Mammary epithelial cell (primary cell): ENCODE measurements at regions of chr12 and their contacts with region 1.

Region 1: GRCh38 chr12:100706033-100706432 is 88.5 kb upstream of the ANO4 start:
- DNase-seq: peak; percentile 98
- H3K4me3 ChIP-seq: no peak overlapping the region
- H3K27ac ChIP-seq: peak overlapping the region; percentile 92
- H3K4me1 ChIP-seq: peaks cover 14% of the 10 kb centered on the region
- H3K27me3 ChIP-seq: no peaks in the 10 kb centered on the region
- CTCF ChIP-seq: no peak

Region 2: DNA sequence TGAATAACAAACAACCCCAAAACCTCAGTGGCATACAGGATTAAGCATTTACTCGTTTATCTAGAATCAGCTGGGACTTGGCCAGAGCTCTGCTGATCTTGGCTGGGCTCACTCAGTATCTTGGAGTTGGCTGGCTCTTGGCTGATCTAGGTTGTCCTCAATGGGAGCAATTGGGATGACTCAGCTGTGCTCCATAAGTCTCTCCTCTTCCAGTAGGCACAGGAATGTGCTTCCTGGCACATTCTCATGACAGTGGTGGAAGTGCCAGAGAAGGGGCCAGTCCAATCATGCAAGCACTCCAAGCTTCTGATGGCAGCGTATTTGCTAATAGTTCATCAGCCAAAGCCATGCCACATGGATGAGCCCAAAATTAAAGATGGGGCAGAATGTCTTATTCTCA is 46.8 kb after region 1 on chr12:
- CTCF ChIA-PET with region 1: no interaction called
- dilution Hi-C with region 1: no loop called
- in situ Hi-C with region 1: no loop called
- intact Hi-C with region 1: loop called (anchors 1 kb)
- DNase-seq: peak; percentile 65
- H3K4me3 ChIP-seq: no peak overlapping the region
- H3K27ac ChIP-seq: peak overlapping the region; percentile 97
- H3K4me1 ChIP-seq: peaks cover 28% of the 10 kb centered on the region
- H3K27me3 ChIP-seq: no peaks in the 10 kb centered on the region
- CTCF ChIP-seq: no peak

Region 3: DNA sequence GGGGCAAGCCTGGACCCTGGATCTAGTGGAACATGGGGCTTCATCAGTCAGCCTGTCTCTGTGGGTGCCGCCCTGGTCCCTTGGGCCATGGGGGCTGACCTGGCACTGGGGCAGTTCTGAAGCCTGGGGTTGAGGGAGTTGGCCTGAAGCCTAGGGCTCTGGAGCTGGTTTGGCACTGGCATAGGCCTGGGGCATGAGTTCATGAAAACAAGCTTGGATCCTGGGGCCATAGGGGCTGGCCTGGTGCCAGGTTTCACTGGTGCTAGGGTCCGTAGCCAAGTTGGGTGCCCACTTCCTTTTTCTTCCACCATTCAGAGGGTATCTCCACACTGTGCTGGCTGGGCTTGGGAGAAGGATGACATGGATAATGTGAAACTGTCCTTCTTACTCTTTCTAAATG is 61.9 kb after region 1 on chr12:
- CTCF ChIA-PET with region 1: no interaction called
- dilution Hi-C with region 1: no loop called
- in situ Hi-C with region 1: no loop called
- intact Hi-C with region 1: no loop called
- DNase-seq: no peak
- H3K4me3 ChIP-seq: no peak overlapping the region
- H3K27ac ChIP-seq: no peak overlapping the region
- H3K4me1 ChIP-seq: peaks cover 8% of the 10 kb centered on the region
- H3K27me3 ChIP-seq: no peaks in the 10 kb centered on the region
- CTCF ChIP-seq: no peak

Region 4: GRCh38 chr12:100845095-100845494 is 139.1 kb after region 1 on chr12:
- CTCF ChIA-PET with region 1: no interaction called
- dilution Hi-C with region 1: no loop called
- in situ Hi-C with region 1: no loop called
- intact Hi-C with region 1: no loop called
- DNase-seq: peak; percentile 35
- H3K4me3 ChIP-seq: no peak overlapping the region
- H3K27ac ChIP-seq: no peak overlapping the region
- H3K4me1 ChIP-seq: peaks cover 8% of the 10 kb centered on the region
- H3K27me3 ChIP-seq: no peaks in the 10 kb centered on the region
- CTCF ChIP-seq: no peak